T-cell (primary cell): ENCODE measurements at regions of chr12 and their contacts with region 1.

Region 1: DNA sequence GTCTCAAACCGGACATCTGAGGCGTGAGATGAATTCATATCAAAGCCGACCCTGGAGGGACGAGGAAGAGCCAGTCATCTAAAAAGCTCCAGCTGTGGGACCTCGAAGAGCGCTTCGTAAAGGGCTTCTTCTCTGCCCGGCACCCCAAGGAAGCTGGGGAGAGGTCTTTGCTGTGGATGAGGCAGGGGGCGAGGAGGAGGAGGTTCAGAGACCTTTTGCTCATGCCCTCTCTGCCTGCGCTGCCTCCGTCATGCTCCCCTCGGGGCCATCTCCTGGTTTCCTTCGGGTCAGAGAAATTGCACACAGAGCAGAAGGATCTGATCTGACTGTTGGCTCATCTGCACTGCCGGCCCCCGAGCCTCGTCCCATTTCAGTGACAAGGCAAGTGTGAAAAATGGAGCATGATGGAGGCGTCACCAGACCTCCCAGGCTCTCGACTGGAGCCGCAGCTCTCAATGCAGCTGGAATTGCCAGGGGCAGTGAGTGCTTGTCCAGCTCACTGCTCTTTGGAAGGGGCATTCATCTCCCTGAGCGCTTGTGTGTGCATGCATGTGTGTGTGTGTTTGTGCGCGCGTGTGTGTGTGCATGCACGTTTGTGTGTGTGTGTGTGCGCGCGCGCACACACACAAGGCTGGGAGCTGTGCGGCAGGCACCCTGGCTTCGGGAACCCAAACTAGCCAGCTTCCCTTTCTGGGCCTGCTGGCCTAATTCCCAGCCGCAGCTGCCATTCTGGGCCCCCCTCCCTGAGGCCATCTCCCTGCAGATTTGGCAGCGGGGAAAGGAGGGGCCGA is 9.2 kb downstream of the CABP1 start:
- DNase-seq: no peak
- ATAC-seq: peak in 1 of 4 experiments; percentile 8
- H3K4me3 ChIP-seq: peak overlapping the region in 1 of 2 donors; percentile 17
- H3K4me3 Mint-ChIP-seq: peak overlapping the region in 2 of 3 donors; percentile 37 to 46
- H3K27ac ChIP-seq: no peak overlapping the region
- H3K27ac Mint-ChIP-seq: peak overlapping the region in 1 of 2 donors; percentile 87
- H3K4me1 ChIP-seq: peaks cover 0 to 12% of the 10 kb centered on the region in 2 experiments
- H3K4me1 Mint-ChIP-seq: peaks cover 12 to 16% (median 15%) of the 10 kb centered on the region in 3 donors
- H3K27me3 ChIP-seq: peaks cover 5 to 69% of the 10 kb centered on the region in 2 experiments
- H3K27me3 Mint-ChIP-seq: peaks cover 46 to 60% of the 10 kb centered on the region in 2 donors

Region 2: DNA sequence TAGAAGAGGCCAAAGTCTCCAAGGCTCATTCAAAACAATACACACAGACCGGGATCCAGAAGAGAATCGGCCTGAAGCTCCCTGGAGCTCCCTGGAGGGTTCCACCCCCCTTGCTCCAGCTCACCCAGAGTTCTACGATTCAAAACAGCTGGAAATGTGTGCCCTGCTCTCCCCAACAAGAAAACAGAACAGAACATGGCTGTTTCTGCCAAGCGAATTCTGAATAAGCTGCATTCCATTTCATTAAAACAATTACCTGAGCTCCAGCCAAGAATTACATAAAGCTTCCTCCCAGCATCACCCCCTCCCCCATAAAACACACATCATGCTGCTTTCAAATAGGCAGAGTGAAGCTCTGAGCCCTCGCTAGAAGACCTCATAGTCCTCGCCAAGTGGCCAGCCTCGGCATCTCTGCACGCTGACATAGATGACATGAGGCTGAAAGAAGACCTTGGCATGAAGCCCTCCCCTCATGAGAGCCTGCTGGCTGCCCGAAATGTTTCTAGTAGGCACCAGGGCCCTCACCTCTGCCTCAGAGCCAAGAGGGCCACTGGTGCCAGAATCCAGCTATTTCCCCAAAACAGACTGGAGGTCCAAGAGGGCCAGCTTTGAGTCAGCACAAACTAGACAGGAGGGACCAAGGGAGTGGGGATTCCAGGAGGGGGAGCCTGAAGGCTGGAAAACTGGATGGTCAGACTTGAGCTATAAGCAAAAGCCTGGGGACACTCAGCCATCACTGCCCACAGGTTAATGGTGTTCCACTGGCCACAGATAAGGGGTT is 392.4 kb before region 1 on chr12:
- CTCF ChIA-PET with region 1: interaction called in 1 of 2 experiments, 10 read pairs
- POLR2A ChIA-PET with region 1: no interaction called
- DNase-seq: no peak
- ATAC-seq: no peak
- H3K4me3 ChIP-seq: no peak overlapping the region
- H3K4me3 Mint-ChIP-seq: peak overlapping the region in 1 of 3 donors; percentile 97
- H3K27ac ChIP-seq: peak overlapping the region; percentile 43
- H3K27ac Mint-ChIP-seq: peak overlapping the region; percentile 88 to 89
- H3K4me1 ChIP-seq: peaks cover 42 to 100% of the 10 kb centered on the region in 2 experiments
- H3K4me1 Mint-ChIP-seq: peaks cover 93 to 96% (median 95%) of the 10 kb centered on the region in 3 donors
- H3K27me3 ChIP-seq: no peaks in the 10 kb centered on the region
- H3K27me3 Mint-ChIP-seq: no peaks in the 10 kb centered on the region

Region 3: GRCh38 chr12:120353134-120353533 is 296.5 kb before region 1 on chr12:
- CTCF ChIA-PET with region 1: no interaction called
- POLR2A ChIA-PET with region 1: no interaction called
- DNase-seq: no peak
- ATAC-seq: no peak
- H3K4me3 ChIP-seq: no peak overlapping the region
- H3K4me3 Mint-ChIP-seq: no peak overlapping the region
- H3K27ac ChIP-seq: no peak overlapping the region
- H3K27ac Mint-ChIP-seq: no peak overlapping the region
- H3K4me1 ChIP-seq: peaks cover 0 to 2% of the 10 kb centered on the region in 2 experiments
- H3K4me1 Mint-ChIP-seq: peaks cover 0 to 6% (median 0%) of the 10 kb centered on the region in 3 donors
- H3K27me3 ChIP-seq: peaks cover 3 to 40% of the 10 kb centered on the region in 2 experiments
- H3K27me3 Mint-ChIP-seq: peaks cover 16% of the 10 kb centered on the region in 2 donors